Activated CD4-positive, alpha-beta T cell treated with anti-CD3 and anti-CD28 coated beads, Interleukin-2, amount 10 ng/mL, durations not matched to agents 24 days and 14 days (primary cell): ENCODE measurements at regions of chr11 and their contacts with region 1.

Region 1: DNA sequence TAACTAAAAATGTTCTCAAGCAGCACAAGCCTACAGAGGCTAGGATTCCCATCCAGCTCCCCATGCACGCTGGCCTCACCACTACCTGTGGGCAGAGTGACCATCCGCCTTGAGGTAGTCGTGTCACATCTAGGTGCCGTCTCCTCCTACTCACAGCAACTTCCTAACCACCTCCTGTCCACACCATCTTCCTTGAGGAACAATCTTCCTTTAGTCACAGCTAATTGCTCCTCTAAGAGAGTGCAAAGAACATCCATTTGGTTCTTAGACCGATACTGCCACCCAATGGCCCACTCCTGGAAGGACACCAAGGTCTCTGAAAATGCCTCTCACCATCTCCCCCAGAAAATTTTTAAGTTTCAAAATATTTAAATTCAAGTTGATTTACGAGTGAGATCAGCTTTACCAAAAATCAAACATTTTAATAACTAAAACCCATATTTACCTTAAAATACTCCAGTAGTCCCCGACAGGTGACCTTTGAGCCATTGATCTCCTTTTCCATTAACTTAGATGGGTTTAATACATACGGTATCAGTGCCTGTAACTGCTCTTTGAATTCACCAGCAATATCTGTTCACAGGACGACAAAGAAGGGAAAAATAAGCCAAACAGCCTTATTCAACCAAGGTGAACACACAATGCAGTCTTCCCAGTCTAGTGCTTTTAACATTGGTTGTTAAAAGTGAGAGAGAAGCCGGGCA is 21.7 kb upstream of the PLAAT3 start:
- DNase-seq: peak; percentile 89
- H3K4me3 Mint-ChIP-seq: no peak overlapping the region
- H3K27ac Mint-ChIP-seq: no peak overlapping the region
- H3K4me1 Mint-ChIP-seq: peaks cover 13% of the 10 kb centered on the region
- H3K27me3 Mint-ChIP-seq: no peaks in the 10 kb centered on the region

Region 2: DNA sequence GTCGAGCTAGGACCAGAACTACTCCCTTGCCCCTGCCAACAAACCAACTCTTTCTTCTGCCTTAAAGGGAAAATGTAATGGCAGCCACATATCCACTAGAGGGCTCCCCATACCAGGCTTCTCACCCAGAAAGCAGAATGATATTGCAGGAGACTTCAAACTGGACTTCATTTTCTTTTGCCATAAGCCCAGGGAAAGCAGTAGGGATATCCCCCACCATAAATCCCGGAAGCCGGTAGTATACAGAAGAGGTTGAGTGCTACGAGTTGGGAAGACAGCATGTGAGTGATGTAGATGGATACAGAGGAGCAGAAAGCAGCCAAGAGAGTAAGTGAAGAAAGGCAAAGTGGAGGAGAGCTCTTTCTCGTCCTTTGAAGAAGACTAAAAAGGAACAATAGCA is 157.0 kb before region 1 on chr11:
- intact Hi-C with region 1: loop called (anchors 1 kb)
- DNase-seq: peak; percentile 86
- H3K4me3 Mint-ChIP-seq: no peak overlapping the region
- H3K27ac Mint-ChIP-seq: no peak overlapping the region
- H3K4me1 Mint-ChIP-seq: no peaks in the 10 kb centered on the region
- H3K27me3 Mint-ChIP-seq: peaks cover 41% of the 10 kb centered on the region

Region 3: GRCh38 chr11:63518548-63518947 is 117.4 kb before region 1 on chr11:
- intact Hi-C with region 1: no loop called
- DNase-seq: no peak
- H3K4me3 Mint-ChIP-seq: no peak overlapping the region
- H3K27ac Mint-ChIP-seq: peak overlapping the region; percentile 32
- H3K4me1 Mint-ChIP-seq: peaks cover 10% of the 10 kb centered on the region
- H3K27me3 Mint-ChIP-seq: peaks cover 5% of the 10 kb centered on the region

Region 4: DNA sequence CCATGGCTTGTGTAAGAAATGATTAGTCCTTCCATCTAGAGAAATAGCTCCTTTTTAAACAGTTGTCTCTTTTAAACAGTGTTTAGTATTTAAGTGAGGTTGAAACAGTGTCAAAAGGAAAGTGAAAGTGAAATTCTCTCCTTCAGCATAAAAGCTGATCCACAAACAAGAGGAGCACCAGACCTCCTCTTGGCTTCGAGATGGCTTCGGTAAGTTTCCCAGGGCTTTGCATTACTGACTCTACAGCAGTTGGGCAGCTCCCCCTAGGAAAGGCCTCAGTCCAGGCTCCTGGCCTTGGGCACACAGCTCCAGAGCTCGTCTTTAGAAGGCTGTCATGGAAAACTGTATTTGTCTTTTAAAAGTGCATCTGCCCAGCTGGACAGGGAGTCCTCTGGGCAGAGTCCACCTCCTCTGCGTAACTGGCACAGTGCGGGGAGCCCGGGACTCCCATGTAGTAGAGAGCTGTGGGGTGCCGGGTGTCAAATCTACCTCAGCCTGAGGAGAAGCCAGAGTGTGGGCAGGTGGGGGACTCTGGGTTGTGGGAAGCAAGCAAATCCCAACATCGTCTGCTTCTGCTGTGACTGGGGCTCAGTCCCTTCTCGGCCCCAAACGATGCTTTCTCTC is 99.1 kb before region 1 on chr11 and contains the start of gene PLAAT4:
- intact Hi-C with region 1: loop called (anchors 5 kb)
- DNase-seq: peak; percentile 88
- H3K4me3 Mint-ChIP-seq: peak within 1 kb of the TSS; percentile 90
- H3K27ac Mint-ChIP-seq: peak within 1 kb of the TSS; percentile 88
- H3K4me1 Mint-ChIP-seq: peaks cover 66% of the 10 kb centered on the region
- H3K27me3 Mint-ChIP-seq: no peaks in the 10 kb centered on the region
- total RNA-seq, gene PLAAT4: 12.2 and 14.7 TPM in 2 replicates

Region 5: DNA sequence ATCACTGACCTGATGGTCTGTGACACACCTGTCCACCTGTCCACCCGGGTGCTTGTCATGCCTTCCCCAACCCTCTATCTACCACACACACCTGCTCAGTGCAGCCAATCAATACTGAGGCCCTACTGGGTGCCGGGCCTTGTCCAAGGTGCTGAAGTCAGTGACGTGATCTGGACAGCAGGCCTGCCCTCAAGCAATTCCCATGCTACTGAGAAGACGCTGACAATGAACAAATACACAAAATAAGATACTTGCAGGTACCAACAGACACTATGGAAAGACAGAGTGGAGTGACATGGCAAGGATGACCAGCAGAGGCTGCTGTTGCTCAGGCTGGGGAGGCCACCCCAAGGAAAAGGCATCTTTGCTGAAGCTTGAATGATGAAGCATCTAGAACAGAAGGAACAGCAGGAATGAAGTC is 42.9 kb before region 1 on chr11:
- intact Hi-C with region 1: loop called (anchors 5 kb)
- DNase-seq: peak; percentile 64
- H3K4me3 Mint-ChIP-seq: no peak overlapping the region
- H3K27ac Mint-ChIP-seq: no peak overlapping the region
- H3K4me1 Mint-ChIP-seq: no peaks in the 10 kb centered on the region
- H3K27me3 Mint-ChIP-seq: no peaks in the 10 kb centered on the region

Region 6: DNA sequence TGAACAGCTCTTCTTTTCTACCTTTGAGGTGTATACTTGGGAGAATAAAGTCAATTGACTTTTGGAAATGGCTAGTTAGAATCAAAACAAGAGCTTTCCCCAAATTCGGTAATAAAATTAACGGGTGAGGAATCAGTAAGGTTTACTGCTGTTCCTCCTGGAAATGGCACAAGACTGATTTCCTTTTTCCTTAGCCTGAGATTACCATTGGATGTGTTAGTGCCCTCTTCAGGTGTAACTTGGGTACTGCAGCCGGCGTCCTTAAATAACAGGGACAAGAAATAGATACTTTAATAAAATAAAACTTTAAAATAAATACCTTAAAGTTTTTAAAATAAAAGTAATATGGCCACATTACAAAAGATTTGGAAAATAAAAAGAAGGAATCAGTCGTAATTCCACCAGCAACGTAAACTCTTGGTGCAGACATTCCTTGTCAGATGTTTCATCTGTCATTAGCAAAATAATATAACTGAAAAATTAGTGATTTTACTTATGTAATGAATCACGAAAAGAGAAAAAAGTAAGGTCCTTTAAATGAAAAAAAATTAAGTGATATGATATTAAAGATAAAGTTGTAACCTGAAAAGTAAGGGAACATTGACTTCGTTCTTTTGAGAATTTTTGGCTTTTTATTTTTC is 102.9 kb after region 1 on chr11:
- intact Hi-C with region 1: loop called (anchors 10 kb)
- DNase-seq: peak; percentile 88
- H3K4me3 Mint-ChIP-seq: no peak overlapping the region
- H3K27ac Mint-ChIP-seq: no peak overlapping the region
- H3K4me1 Mint-ChIP-seq: peaks cover 2% of the 10 kb centered on the region
- H3K27me3 Mint-ChIP-seq: no peaks in the 10 kb centered on the region